Posterior cingulate gyrus (tissue), 11 donors: ENCODE measurements at regions of chr9 and their contacts with region 1.

Region 1: GRCh38 chr9:78369639-78370219 is 72.8 kb downstream of the PSAT1 start:
- DNase-seq: peak; percentile 61 to 96 (median 84)

Region 2: GRCh38 chr9:78221425-78221824 is 148.3 kb before region 1 on chr9:
- intact Hi-C with region 1: no loop called
- DNase-seq: no peak

Region 3: GRCh38 chr9:78261403-78262001 is 108.2 kb before region 1 on chr9:
- intact Hi-C with region 1: loop called (anchors 1 kb)
- DNase-seq: no peak

Region 4: GRCh38 chr9:78304357-78304756 is 65.4 kb before region 1 on chr9:
- intact Hi-C with region 1: loop called (anchors 10 kb)
- DNase-seq: no peak

Region 5: DNA sequence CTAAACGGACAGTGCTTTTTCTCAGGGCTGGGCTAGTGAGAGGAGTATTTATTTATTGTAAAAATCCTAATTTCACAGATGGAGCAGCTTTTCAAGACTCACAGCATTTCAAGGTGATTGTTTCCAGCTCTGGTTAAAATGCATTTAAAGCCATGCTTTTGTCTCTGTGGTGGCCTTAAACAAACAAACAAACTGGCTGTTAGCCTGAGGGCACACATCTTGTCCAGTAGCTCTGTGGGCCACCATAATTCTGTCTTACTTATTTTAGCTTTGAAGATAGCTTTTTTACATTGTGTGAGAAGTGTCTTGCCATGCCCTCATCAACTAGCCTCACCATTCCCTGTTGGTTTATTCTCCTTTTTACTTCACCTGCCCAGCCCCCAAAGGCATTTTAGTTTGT is 145.4 kb after region 1 on chr9:
- intact Hi-C with region 1: no loop called
- DNase-seq: no peak